HAP-1 (cell line): ENCODE measurements at regions of chr6 and their contacts with region 1.

Region 1: DNA sequence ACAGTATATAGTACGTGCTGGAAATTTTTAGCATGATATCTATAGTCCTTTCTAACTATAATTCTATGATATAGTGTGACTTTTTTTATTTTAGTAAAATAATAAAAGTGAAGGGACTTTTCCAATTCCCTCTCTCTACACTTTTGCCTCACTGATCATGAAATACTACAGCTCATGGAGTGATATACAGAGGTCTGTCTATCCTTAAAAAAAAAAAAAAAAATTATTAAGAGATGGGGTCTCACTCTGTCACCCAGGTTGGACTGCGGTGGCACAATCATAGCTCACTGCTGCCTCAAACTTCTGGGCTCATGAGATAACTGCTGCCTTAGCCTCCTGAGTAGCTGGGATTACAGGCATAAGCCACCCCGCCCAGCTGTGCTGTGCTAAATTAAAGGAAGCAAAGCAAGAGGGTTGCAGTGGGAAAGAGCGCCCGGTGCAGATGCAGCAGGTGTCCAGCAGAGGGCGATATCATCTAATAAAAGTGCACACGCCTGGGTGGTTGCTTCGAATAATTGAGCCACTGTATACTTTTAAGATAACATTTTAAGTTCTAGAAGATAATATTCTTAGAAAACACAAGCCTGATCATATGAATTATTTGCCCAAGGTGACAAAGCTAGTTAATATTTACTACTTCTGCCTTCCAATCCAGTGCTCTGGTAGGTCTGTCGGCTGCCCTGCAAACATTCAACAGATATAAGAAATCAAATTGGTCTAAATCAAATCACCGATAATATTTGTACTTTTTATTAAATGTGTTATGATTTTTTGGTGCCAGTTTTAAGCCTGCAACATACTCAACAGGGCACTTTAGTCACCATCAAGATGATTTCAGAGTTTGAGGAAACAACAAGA is 94.9 kb upstream of the NT5E start:
- DNase-seq: peak; percentile 57 to 78
- H3K4me3 ChIP-seq: no peak overlapping the region
- H3K4me1 ChIP-seq: no peaks in the 10 kb centered on the region
- H3K27me3 ChIP-seq: no peaks in the 10 kb centered on the region; the same call in 1 of the 2 replicates

Region 2: DNA sequence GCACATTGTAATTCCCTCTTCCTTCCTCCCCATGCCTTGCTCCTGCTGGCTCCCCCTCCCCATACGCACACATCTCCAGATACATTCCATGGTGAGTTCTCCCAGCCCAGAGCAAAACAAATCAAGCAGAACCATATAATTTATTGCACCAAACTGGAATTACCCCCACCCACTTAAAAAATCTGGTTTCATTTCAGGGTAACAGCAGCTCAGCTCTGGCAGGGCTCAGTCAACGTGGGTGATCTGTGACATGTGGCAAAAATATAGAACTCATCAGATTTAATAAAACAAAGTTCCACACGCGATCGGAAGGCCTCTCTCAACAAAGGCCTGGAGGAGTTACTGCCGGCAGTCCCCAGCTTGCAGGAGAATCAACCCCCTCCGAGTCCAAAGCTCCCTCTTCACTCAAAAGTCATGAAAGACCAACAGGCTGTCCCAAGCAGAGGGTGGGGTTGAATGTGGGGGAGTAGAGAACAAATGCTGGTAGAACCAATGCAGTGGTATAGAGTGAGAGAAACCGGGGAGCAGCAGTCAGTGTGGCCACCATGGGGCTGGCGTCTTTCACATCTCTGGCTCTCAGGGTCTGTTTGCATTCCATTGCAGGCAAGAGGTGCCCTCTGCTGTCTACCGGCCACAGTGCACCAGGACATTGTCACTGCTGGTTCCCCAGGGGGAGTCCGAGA is 228.4 kb before region 1 on chr6:
- in situ Hi-C with region 1: no loop called
- DNase-seq: peak in 1 of 2 experiments; percentile 62
- H3K4me3 ChIP-seq: no peak overlapping the region
- H3K4me1 ChIP-seq: no peaks in the 10 kb centered on the region
- H3K27me3 ChIP-seq: peaks cover 3% of the 10 kb centered on the region; the same call in 1 of the 2 replicates

Region 3: GRCh38 chr6:85482905-85483700 is 128.1 kb after region 1 on chr6:
- in situ Hi-C with region 1: loop called (anchors 5 kb)
- DNase-seq: peak; percentile 38 to 81
- H3K4me3 ChIP-seq: no peak overlapping the region
- H3K4me1 ChIP-seq: no peaks in the 10 kb centered on the region
- H3K27me3 ChIP-seq: no peaks in the 10 kb centered on the region